CD4-positive, alpha-beta memory T cell (primary cell): ENCODE measurements at regions of chr12 and their contacts with region 1.

Region 1: DNA sequence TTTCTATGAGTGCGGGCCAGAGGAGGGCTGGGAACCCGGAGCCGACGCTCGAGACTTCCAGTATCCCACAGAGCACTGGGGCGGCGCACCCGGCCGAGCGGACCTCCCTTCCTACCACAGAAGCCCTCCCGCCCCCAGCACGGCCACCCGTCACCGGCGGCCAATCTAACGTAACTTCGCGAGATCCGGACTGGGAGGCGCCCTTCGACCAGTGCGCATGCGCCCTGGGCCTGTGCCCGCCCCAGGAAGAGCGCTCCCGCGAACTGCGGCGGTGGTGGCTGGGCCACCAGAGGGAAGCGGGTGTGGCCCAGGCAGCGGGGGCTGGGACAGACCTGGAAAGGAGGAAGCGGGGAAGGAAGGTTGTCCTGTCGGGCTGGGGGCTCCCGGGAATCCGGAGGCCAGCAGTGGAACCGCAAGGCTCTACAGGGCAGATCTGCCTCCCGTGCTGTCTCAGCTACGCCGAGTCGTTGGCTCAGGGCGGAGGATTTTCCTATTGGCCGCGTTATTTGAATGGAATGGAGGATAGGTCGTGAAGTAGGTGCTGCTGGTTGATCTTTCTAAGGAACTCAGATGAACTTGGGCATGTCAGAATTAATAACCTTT is at the start of gene PPP1R12A:
- DNase-seq: peak; percentile 94 to 96 (median 95)
- H3K4me3 ChIP-seq: peak within 1 kb of the TSS; percentile 80 to 90
- H3K4me3 Mint-ChIP-seq: peak within 1 kb of the TSS; percentile 91 to 100 (median 96)
- H3K27ac ChIP-seq: peak within 1 kb of the TSS; percentile 91
- H3K27ac Mint-ChIP-seq: peak within 1 kb of the TSS; percentile 89 to 99 (median 98)
- H3K4me1 ChIP-seq: peaks cover 38% of the 10 kb centered on the region
- H3K4me1 Mint-ChIP-seq: peaks cover 28 to 60% (median 40%) of the 10 kb centered on the region in 4 donors
- H3K27me3 ChIP-seq: no peaks in the 10 kb centered on the region
- H3K27me3 Mint-ChIP-seq: no peaks in the 10 kb centered on the region
- total RNA-seq, gene PPP1R12A: 127 to 129 TPM

Region 2: DNA sequence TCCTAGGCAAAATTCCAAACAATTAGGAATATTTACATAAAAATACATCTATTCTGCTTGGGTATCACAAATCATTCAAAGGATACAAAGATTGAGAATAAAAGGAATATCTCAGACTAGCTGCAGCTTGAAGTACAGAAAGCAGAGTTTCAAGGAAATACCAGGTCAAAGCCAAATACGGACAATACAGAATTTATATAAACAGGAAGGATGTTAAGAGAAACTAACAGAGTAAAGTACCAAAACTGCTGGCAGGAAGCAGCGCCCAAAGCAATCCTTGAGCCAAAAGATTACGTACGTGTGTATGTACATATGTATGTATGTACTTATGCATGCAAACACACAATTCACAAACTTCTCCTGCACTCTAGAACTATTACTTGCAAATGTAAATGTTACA is 86.8 kb before region 1 on chr12:
- CTCF ChIA-PET with region 1: no interaction called
- POLR2A ChIA-PET with region 1: no interaction called
- intact Hi-C with region 1: no loop called
- DNase-seq: peak in 2 of 5 donors; percentile 13 to 18
- H3K4me3 ChIP-seq: no peak overlapping the region
- H3K4me3 Mint-ChIP-seq: peak overlapping the region in 5 of 8 donors; percentile 29 to 70 (median 65)
- H3K27ac ChIP-seq: no peak overlapping the region
- H3K27ac Mint-ChIP-seq: peak overlapping the region in 6 of 7 donors; percentile 17 to 62 (median 42)
- H3K4me1 ChIP-seq: peaks cover 25% of the 10 kb centered on the region
- H3K4me1 Mint-ChIP-seq: peaks cover 35 to 55% (median 47%) of the 10 kb centered on the region in 4 donors
- H3K27me3 ChIP-seq: no peaks in the 10 kb centered on the region
- H3K27me3 Mint-ChIP-seq: no peaks in the 10 kb centered on the region

Region 3: GRCh38 chr12:79886917-79887519 is 48.1 kb before region 1 on chr12:
- CTCF ChIA-PET with region 1: interaction called, 5 read pairs
- POLR2A ChIA-PET with region 1: no interaction called
- intact Hi-C with region 1: loop called (anchors 2 kb)
- DNase-seq: peak in 4 of 5 donors; percentile 35 to 50 (median 38)
- H3K4me3 ChIP-seq: no peak overlapping the region
- H3K4me3 Mint-ChIP-seq: peak overlapping the region in 1 of 8 donors; percentile 2
- H3K27ac ChIP-seq: no peak overlapping the region
- H3K27ac Mint-ChIP-seq: no peak overlapping the region
- H3K4me1 ChIP-seq: peaks cover 71% of the 10 kb centered on the region
- H3K4me1 Mint-ChIP-seq: peaks cover 55 to 84% (median 68%) of the 10 kb centered on the region in 4 donors
- H3K27me3 ChIP-seq: no peaks in the 10 kb centered on the region
- H3K27me3 Mint-ChIP-seq: no peaks in the 10 kb centered on the region